ENCODE measurements at regions of chr7 and their contacts with region 1.

Region 1: DNA sequence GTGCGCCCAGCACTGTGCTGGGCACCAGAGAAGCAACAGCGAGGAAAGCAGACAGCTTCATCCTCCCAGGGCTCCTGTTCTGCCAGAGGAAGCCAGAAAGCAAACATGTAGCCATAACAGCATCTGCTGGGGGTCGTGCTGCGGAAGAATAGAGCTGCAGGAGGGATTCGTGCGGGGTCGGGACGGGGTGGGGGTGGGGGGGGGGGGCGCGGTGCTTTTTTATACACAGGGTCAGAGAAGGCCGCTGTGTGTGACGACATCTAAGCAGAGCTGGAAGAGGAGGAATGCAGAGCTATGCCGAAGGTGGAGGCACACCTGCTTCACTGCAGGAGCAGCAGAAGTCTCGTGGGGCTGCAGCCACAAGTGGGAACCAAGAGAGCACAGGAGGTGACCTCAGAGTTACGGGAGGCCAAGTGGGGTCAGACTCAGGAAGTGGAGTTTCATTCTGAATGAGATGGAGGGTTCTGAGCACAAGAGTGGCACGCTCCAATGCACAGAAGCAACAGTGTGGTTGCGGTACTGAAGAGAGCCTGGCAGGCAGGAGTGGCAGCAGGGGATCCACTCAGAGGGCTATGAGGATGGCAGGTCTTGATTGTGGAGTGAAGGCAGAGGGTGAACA is 11.1 kb downstream of the PKD1L1 start:
- DNase-seq: peak; percentile 83
- H3K4me3 ChIP-seq: peak overlapping the region; percentile 42
- H3K27ac ChIP-seq: peak overlapping the region; percentile 80
- H3K4me1 ChIP-seq: peaks cover 38% of the 10 kb centered on the region
- CTCF ChIP-seq: no peak

Region 2: DNA sequence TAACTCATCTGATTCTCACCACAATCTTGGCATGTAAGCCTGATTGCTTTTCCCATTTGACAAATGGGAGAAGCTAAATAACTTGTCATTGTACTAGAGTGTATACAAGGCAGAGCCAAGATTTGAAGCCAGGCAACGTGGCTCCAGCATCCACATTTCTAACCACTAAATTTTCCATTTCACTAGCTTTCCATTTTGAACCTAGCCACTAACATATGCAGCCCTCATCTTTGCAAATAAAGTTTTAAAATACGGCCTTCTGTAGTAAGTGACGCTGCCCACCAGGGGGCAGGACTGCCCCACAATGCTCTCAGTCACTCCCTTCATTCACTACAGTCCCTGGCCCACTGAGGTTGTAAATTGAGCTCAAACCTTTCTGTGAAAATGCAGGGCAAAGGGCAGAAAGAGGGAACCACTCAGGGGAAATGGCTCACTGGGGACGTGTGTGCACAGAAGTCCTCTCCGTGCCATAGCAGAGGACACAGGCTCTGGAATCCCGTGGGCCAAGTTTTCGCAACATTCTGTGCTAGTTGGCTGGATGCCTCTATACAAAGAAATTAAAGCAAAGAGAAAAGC is 671.0 kb before region 1 on chr7:
- CTCF ChIA-PET with region 1: interaction called, 18 read pairs
- POLR2A ChIA-PET with region 1: interaction called, 4 read pairs
- intact Hi-C with region 1: loop called (anchors 1 kb)
- DNase-seq: peak; percentile 67
- H3K4me3 ChIP-seq: no peak overlapping the region
- H3K27ac ChIP-seq: no peak overlapping the region
- H3K4me1 ChIP-seq: no peaks in the 10 kb centered on the region
- CTCF ChIP-seq: peak; percentile 98

Region 3: DNA sequence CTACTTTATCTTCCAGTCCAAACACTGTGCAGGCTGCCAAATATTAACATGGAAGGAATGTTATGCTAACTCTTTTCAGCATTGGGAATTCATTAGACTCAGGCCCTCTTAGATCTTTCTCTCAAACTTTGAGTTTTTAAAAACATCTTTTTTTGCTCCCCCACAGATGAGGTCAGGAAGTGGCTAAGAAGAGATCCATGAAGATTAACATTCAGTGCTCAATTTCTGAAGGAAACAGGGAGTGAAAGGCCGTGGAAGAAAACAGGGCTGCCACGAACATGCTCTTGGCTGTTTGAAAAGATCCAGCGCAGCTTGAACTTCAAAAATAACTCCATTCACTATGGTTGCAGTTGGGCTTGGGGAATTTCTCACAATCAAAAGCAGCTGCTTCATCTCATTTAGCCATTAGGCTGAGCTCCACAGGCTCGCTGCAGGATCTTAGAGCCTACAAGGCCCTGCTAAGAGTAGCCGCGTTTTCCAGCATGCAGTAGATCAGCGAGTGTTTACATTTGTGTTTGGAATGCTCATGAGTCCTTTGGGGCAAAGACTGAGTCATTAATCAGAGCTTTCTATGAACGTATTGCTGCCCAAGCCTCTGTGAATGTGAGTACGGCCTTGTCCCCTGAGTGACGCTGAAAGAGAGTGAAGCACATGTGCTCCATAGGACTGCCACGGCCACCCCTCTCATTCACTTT is 314.1 kb before region 1 on chr7:
- CTCF ChIA-PET with region 1: no interaction called
- POLR2A ChIA-PET with region 1: no interaction called
- intact Hi-C with region 1: loop called (anchors 5 kb)
- DNase-seq: no peak
- H3K4me3 ChIP-seq: peak overlapping the region; percentile 46
- H3K27ac ChIP-seq: peak overlapping the region; percentile 55
- H3K4me1 ChIP-seq: peaks cover 79% of the 10 kb centered on the region
- CTCF ChIP-seq: no peak

Region 4: DNA sequence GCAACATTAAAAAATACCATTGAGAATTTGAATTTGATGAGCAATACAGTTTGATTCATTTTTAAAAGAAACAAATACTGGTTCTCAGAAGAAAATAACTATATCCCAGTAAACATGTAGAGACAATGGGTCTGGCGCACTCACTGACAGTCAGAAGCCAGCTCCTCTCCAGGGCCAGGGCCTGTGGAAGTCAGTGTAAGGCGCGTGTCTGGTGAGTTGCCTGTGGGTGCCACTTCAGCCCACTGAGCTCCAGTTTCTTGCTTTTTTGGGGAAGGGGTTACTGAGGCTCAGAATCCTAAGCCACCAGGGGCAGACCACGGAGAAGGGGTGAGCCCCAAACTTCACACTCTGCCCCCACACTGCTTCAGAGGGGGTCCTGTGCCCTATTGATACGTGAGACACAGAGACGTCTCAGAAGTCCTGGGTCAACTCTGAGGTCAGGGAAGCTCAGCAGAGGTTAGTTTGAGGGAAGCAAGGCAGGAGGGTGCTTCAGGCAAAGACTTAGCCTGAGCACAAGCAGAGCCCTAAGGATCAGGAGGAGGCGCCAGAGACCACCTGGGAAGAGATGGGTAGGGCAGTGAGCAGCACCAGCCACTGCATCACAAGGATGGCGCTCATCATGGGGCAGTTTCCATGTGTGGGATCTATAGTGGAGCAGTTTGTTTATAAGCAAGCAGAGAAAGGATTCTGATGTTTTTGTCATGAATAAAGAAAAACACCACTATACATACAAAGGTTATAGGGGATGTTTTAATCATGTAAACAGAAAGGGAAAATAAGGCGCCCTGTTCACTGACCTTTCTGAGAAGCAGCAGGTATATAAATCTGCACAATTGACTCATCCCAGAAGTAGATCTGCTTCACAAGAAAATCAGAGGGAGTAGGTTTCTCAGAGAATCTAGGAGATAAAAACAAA is 84.6 kb before region 1 on chr7:
- CTCF ChIA-PET with region 1: no interaction called
- POLR2A ChIA-PET with region 1: interaction called, 3 read pairs
- intact Hi-C with region 1: loop called (anchors 2 kb)
- DNase-seq: peak; percentile 24
- H3K4me3 ChIP-seq: no peak overlapping the region
- H3K27ac ChIP-seq: no peak overlapping the region
- H3K4me1 ChIP-seq: no peaks in the 10 kb centered on the region
- CTCF ChIP-seq: peak; percentile 67

Region 5: GRCh38 chr7:47893247-47893646 is 43.9 kb before region 1 on chr7:
- CTCF ChIA-PET with region 1: no interaction called
- POLR2A ChIA-PET with region 1: interaction called, 8 read pairs
- intact Hi-C with region 1: loop called (anchors 5 kb)
- DNase-seq: peak; percentile 31
- H3K4me3 ChIP-seq: no peak overlapping the region
- H3K27ac ChIP-seq: no peak overlapping the region
- H3K4me1 ChIP-seq: no peaks in the 10 kb centered on the region
- CTCF ChIP-seq: peak; percentile 72

Region 6: GRCh38 chr7:47905096-47905920 is 31.9 kb before region 1 on chr7:
- CTCF ChIA-PET with region 1: no interaction called
- POLR2A ChIA-PET with region 1: no interaction called
- intact Hi-C with region 1: no loop called
- DNase-seq: no peak
- H3K4me3 ChIP-seq: no peak overlapping the region
- H3K27ac ChIP-seq: no peak overlapping the region
- H3K4me1 ChIP-seq: no peaks in the 10 kb centered on the region
- CTCF ChIP-seq: no peak

Region 7: GRCh38 chr7:47979145-47979831 is 42.1 kb after region 1 on chr7 and contains the start of gene HUS1:
- CTCF ChIA-PET with region 1: no interaction called
- POLR2A ChIA-PET with region 1: interaction called, 3 read pairs
- intact Hi-C with region 1: loop called (anchors 2 kb)
- DNase-seq: peak; percentile 98
- H3K4me3 ChIP-seq: peak within 1 kb of the TSS; percentile 85
- H3K27ac ChIP-seq: peak within 1 kb of the TSS; percentile 84
- H3K4me1 ChIP-seq: peaks cover 20% of the 10 kb centered on the region
- CTCF ChIP-seq: no peak
- total RNA-seq, gene HUS1: 24.7 and 28.2 TPM in 2 replicates

Region 8: GRCh38 chr7:48074204-48074654 is 137.1 kb after region 1 on chr7:
- CTCF ChIA-PET with region 1: no interaction called
- POLR2A ChIA-PET with region 1: no interaction called
- intact Hi-C with region 1: no loop called
- DNase-seq: no peak
- H3K4me3 ChIP-seq: no peak overlapping the region
- H3K27ac ChIP-seq: no peak overlapping the region
- H3K4me1 ChIP-seq: no peaks in the 10 kb centered on the region
- CTCF ChIP-seq: no peak

Measured in OCI-LY7 (cell line).